Endothelial cell of umbilical vein (primary cell): ENCODE measurements at regions of chr1 and their contacts with region 1.

Region 1: DNA sequence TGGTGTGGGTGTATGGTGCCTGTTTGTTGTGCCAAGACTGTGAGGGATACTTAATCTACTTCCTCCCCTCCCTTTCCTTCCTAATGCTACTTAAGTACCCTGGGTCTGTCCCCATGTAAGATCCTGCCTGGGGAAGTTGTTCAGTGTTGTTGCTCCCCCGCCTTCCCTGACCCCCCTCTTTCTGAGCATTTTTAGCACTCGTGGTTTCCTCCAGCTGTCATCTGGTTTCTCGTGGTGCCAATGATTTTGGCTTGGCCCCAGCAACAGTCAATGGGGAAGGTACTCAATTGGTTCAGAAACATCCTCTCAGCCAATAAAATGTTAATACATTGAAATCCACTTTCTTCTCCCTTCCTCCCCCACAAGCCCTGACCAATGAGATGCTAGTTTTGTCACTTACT is 8.0 kb upstream of the B4GALT3 start:
- DNase-seq: peak; percentile 99
- H3K4me3 ChIP-seq: no peak overlapping the region
- H3K27ac ChIP-seq: peak overlapping the region; percentile 48
- H3K4me1 ChIP-seq: peaks cover 28% of the 10 kb centered on the region
- H3K27me3 ChIP-seq: no peaks in the 10 kb centered on the region
- CTCF ChIP-seq: no peak
- POLR2A ChIP-seq: peak; percentile 37

Region 2: DNA sequence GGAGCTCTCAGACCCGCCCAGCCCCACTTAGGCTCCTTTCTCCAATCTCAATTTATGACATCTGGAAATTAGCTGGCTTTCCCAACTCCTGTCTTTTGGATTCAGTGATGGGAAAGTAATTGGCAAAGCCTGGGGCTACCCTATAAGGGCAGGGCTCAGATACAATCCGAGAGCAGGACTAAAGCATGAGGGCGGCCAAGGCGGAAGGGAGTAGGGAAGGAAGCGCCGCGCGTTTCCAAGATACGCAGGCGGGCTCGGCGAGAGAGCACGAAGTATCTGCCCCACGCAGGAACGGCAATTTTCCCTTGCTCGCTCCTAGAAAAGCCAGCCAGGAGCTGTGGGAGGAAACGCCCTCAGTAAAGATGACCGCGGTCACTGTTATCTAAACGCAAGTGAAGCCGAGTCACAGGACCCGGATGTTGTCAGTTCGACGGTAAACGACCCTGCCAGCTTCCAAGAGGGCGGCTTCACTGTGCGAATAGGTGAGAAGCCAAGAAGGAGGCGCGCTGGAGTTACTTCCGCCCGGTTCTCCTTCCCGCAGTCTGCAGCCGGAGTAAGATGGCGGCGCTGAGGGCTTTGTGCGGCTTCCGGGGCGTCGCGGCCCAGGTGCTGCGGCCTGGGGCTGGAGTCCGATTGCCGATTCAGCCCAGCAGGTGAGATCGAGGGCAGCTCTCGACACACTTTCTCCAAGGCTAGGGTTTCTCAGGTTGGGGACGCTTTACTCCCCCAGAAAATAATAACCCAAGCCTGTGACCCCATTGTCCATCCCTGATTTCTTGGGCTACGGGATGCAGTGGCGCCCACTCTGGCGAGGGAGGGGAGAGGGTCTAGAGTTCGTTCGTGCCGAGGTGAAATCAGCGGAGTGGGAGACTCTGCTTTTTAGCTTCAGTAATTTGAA is 16.8 kb after region 1 on chr1 and contains the start of gene NDUFS2:
- CTCF ChIA-PET with region 1: interaction called, 5 read pairs
- POLR2A ChIA-PET with region 1: no interaction called
- dilution Hi-C with region 1: no loop called
- intact Hi-C with region 1: loop called (anchors 1 kb)
- DNase-seq: peak; percentile 98
- H3K4me3 ChIP-seq: peak within 1 kb of the TSS; percentile 72 to 96 (median 75)
- H3K27ac ChIP-seq: peak within 1 kb of the TSS; percentile 98
- H3K4me1 ChIP-seq: peaks cover 59% of the 10 kb centered on the region
- H3K27me3 ChIP-seq: no peaks in the 10 kb centered on the region
- CTCF ChIP-seq: peak in 1 of 2 donors; percentile 9
- POLR2A ChIP-seq: peak; percentile 93
- total RNA-seq, gene NDUFS2: 95.1 and 99.7 TPM in 2 replicates